ENCODE measurements at regions of chr17 and their contacts with region 1.

Region 1: GRCh38 chr17:49694847-49695683 is 12.7 kb downstream of the SLC35B1 start:
- DNase-seq: peak; percentile 69 to 80
- ATAC-seq: peak; percentile 28 to 63 (median 42)
- H3K4me3 ChIP-seq: no peak overlapping the region
- H3K4me3 Mint-ChIP-seq: peak overlapping the region; percentile 61
- H3K27ac ChIP-seq: peak overlapping the region; percentile 72
- H3K27ac Mint-ChIP-seq: peak overlapping the region; percentile 84 to 94
- H3K4me1 ChIP-seq: peaks cover 21% of the 10 kb centered on the region
- H3K4me1 Mint-ChIP-seq: peaks cover 21 to 22% of the 10 kb centered on the region in 2 donors
- H3K27me3 ChIP-seq: no peaks in the 10 kb centered on the region
- H3K27me3 Mint-ChIP-seq: no peaks in the 10 kb centered on the region
- CTCF ChIP-seq: peak; percentile 94

Region 2: GRCh38 chr17:49407981-49408501 is 287.0 kb before region 1 on chr17:
- intact Hi-C with region 1: loop called (anchors 10 kb)
- DNase-seq: peak; percentile 83 to 90
- ATAC-seq: peak; percentile 79 to 91 (median 80)
- H3K4me3 ChIP-seq: no peak overlapping the region
- H3K4me3 Mint-ChIP-seq: peak overlapping the region; percentile 17
- H3K27ac ChIP-seq: peak overlapping the region; percentile 4
- H3K27ac Mint-ChIP-seq: peak overlapping the region; percentile 71 to 73
- H3K4me1 ChIP-seq: peaks cover 44% of the 10 kb centered on the region
- H3K4me1 Mint-ChIP-seq: peaks cover 33 to 47% of the 10 kb centered on the region in 2 donors
- H3K27me3 ChIP-seq: no peaks in the 10 kb centered on the region
- H3K27me3 Mint-ChIP-seq: no peaks in the 10 kb centered on the region
- CTCF ChIP-seq: peak; percentile 98

Region 3: GRCh38 chr17:49567871-49568694 is 127.0 kb before region 1 on chr17:
- intact Hi-C with region 1: loop called (anchors 1 kb)
- DNase-seq: peak; percentile 85
- ATAC-seq: peak; percentile 66 to 69 (median 68)
- H3K4me3 ChIP-seq: no peak overlapping the region
- H3K4me3 Mint-ChIP-seq: peak overlapping the region; percentile 59
- H3K27ac ChIP-seq: no peak overlapping the region
- H3K27ac Mint-ChIP-seq: peak overlapping the region in 1 of 2 donors; percentile 8
- H3K4me1 ChIP-seq: peaks cover 32% of the 10 kb centered on the region
- H3K4me1 Mint-ChIP-seq: peaks cover 0 to 30% of the 10 kb centered on the region in 2 donors
- H3K27me3 ChIP-seq: no peaks in the 10 kb centered on the region
- H3K27me3 Mint-ChIP-seq: peaks cover 10 to 28% of the 10 kb centered on the region in 2 donors
- CTCF ChIP-seq: peak; percentile 97

Region 4: GRCh38 chr17:49677933-49678847 is 16.9 kb before region 1 on chr17 and contains the start of gene SPOP:
- intact Hi-C with region 1: loop called (anchors 1 kb)
- DNase-seq: peak; percentile 96 to 100
- ATAC-seq: peak; percentile 92 to 99 (median 93)
- H3K4me3 ChIP-seq: peak within 1 kb of the TSS; percentile 88
- H3K4me3 Mint-ChIP-seq: peak within 1 kb of the TSS; percentile 97
- H3K27ac ChIP-seq: peak within 1 kb of the TSS; percentile 99
- H3K27ac Mint-ChIP-seq: peak within 1 kb of the TSS; percentile 97 to 98
- H3K4me1 ChIP-seq: peaks cover 18% of the 10 kb centered on the region
- H3K4me1 Mint-ChIP-seq: peaks cover 43 to 45% of the 10 kb centered on the region in 2 donors
- H3K27me3 ChIP-seq: no peaks in the 10 kb centered on the region
- H3K27me3 Mint-ChIP-seq: peaks cover 0 to 2% of the 10 kb centered on the region in 2 donors
- CTCF ChIP-seq: no peak
- total RNA-seq, gene SPOP: 45.4 to 56.5 (median 54.7) TPM

Region 5: DNA sequence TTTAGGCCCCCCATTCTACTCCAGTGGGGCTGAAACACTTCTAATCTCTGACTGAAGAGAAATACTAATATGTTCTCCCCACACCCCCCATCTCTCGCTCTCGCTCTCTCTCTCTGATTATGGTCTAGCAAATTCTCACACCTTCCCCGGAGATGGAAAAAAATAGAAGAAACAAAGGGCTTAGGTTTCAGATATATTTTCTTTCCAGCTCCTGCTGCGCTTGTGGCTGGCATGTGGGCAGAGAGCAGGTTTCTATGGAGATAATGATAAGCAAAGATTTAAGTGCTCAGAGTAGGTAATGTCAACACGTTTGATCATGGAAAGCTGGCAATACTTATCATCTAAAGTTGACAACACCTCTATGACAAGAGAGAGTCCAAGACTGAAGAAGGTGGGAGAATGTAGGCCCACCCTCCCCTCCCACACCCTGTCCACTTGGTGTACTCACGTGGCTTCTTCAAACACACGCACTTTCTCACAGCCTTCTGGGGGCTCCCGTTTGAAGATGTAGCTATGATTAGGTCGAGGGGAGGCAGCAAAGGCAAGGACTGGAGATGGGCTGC is 20.7 kb after region 1 on chr17:
- intact Hi-C with region 1: loop called (anchors 1 kb)
- DNase-seq: peak; percentile 65 to 84
- ATAC-seq: peak; percentile 61 to 78 (median 71)
- H3K4me3 ChIP-seq: no peak overlapping the region
- H3K4me3 Mint-ChIP-seq: peak overlapping the region; percentile 76
- H3K27ac ChIP-seq: peak overlapping the region; percentile 89
- H3K27ac Mint-ChIP-seq: peak overlapping the region; percentile 97 to 98
- H3K4me1 ChIP-seq: peaks cover 64% of the 10 kb centered on the region
- H3K4me1 Mint-ChIP-seq: peaks cover 55 to 60% of the 10 kb centered on the region in 2 donors
- H3K27me3 ChIP-seq: no peaks in the 10 kb centered on the region
- H3K27me3 Mint-ChIP-seq: no peaks in the 10 kb centered on the region
- CTCF ChIP-seq: no peak

Region 6: GRCh38 chr17:49851387-49852291 is 156.6 kb after region 1 on chr17:
- intact Hi-C with region 1: loop called (anchors 5 kb)
- DNase-seq: peak; percentile 68 to 83
- ATAC-seq: peak; percentile 75 to 81 (median 79)
- H3K4me3 ChIP-seq: peak overlapping the region; percentile 70
- H3K4me3 Mint-ChIP-seq: peak overlapping the region; percentile 91
- H3K27ac ChIP-seq: peak overlapping the region; percentile 54
- H3K27ac Mint-ChIP-seq: peak overlapping the region; percentile 77 to 93
- H3K4me1 ChIP-seq: peaks cover 18% of the 10 kb centered on the region
- H3K4me1 Mint-ChIP-seq: peaks cover 12 to 16% of the 10 kb centered on the region in 2 donors
- H3K27me3 ChIP-seq: no peaks in the 10 kb centered on the region
- H3K27me3 Mint-ChIP-seq: no peaks in the 10 kb centered on the region
- CTCF ChIP-seq: peak; percentile 74

Region 7: DNA sequence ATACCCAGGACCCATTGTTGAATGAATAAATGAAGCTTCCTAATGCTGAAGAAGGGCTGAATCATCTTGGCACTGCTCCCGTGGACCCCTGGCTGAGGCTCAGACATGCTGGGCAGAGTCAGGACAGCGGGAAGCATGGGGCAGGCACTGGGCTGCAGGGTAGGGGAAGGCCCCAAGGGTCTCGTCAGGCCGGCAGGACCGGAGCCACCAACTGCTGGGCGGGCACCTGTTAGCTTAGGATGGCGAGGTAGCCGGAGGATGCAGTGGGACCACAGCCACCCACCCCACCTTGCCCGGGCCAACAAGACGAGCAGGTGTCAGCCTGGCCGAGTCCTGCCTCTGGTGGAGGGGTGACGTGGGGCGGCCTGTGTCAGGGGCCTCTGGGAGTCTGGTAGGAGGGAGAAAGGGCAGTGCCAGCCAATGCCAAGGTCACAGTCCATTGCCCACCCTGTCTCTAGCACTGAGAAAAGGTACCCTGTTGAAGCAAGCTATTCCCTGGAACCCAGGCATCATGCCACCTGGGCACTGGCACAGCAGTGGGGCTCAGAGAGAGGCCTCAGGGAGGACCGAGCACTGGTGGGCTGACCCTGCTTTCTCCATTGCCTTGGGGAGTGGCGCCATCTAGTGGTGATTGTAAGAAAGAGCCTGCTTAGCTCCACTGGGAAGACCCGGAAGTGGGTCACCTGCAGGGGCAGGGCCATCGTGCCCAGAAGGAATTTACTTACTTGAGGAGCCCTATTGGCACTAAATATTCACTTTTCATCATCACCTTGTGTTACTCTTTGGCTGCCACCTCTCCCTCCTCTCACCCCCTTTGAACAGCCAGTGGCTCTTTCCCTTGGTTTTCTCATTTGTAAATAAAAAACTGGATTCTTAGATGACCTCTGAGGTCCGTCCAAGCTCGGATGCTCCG is 303.0 kb after region 1 on chr17:
- intact Hi-C with region 1: loop called (anchors 5 kb)
- DNase-seq: peak; percentile 76 to 95
- ATAC-seq: peak; percentile 87 to 89 (median 88)
- H3K4me3 ChIP-seq: no peak overlapping the region
- H3K4me3 Mint-ChIP-seq: no peak overlapping the region
- H3K27ac ChIP-seq: no peak overlapping the region
- H3K27ac Mint-ChIP-seq: no peak overlapping the region
- H3K4me1 ChIP-seq: peaks cover 36% of the 10 kb centered on the region
- H3K4me1 Mint-ChIP-seq: peaks cover 17 to 31% of the 10 kb centered on the region in 2 donors
- H3K27me3 ChIP-seq: peaks cover 51% of the 10 kb centered on the region
- H3K27me3 Mint-ChIP-seq: peaks cover 54 to 56% of the 10 kb centered on the region in 2 donors
- CTCF ChIP-seq: peak; percentile 92